Dorsolateral prefrontal cortex (tissue), 120 donors: ENCODE measurements at regions of chr6 and their contacts with region 1.

Region 1: DNA sequence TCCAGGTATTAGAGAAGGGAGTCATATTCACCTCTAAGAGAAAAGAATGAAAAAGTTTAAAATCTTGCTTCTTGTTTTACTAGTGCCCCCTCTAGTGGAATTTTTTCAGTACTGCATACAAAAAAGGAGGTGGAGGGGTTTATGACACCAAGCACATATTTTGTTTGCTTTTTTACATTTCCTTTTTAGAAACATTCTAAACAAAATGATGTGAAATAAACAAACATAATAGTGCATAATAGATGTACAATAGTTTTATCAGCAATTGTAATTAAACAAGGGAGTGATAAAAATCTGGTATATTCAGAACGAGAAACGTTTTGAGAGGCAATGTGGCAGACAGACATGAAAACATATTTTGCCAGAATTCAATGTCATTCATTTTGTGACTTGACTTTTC is 111.0 kb upstream of the TFAP2D start:
- DNase-seq: no peak
- H3K4me3 ChIP-seq: no peak overlapping the region
- H3K27ac ChIP-seq: no peak overlapping the region
- H3K27me3 ChIP-seq: peaks cover 0 to 21% (median 0%) of the 10 kb centered on the region in 45 donors
- CTCF ChIP-seq: peak; percentile 68 to 98 (median 84)

Region 2: GRCh38 chr6:50128420-50129005 is 473.8 kb before region 1 on chr6:
- intact Hi-C with region 1: loop called (anchors 5 to 10 kb)
- DNase-seq: no peak
- H3K4me3 ChIP-seq: no peak overlapping the region
- H3K27ac ChIP-seq: no peak overlapping the region
- H3K27me3 ChIP-seq: peaks cover 0 to 32% (median 4%) of the 10 kb centered on the region in 45 donors
- CTCF ChIP-seq: peak in 55 of 56 donors; percentile 26 to 86 (median 65)

Region 3: DNA sequence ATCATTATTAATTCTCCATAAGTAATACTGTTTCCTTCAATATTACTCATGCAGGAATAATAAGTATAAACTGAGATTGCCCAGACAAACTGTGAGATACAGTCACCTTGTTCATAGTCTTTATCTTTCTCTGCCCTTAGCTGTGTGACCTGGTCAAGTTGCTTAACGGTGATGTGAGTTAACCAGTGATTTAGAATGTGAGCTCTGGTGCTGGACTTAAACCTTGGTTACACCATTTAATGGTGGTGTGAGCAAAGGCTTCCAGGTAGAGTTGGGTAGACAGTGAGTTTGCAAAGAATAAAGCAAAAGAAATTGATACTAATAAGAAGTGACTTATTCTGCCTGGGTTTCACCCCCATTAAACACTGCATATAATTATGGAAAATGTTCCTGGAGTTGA is 466.3 kb before region 1 on chr6:
- intact Hi-C with region 1: loop called (anchors 5 to 10 kb)
- DNase-seq: no peak
- H3K4me3 ChIP-seq: no peak overlapping the region
- H3K27ac ChIP-seq: no peak overlapping the region
- H3K27me3 ChIP-seq: peaks cover 0 to 11% (median 0%) of the 10 kb centered on the region in 45 donors
- CTCF ChIP-seq: no peak

Region 4: DNA sequence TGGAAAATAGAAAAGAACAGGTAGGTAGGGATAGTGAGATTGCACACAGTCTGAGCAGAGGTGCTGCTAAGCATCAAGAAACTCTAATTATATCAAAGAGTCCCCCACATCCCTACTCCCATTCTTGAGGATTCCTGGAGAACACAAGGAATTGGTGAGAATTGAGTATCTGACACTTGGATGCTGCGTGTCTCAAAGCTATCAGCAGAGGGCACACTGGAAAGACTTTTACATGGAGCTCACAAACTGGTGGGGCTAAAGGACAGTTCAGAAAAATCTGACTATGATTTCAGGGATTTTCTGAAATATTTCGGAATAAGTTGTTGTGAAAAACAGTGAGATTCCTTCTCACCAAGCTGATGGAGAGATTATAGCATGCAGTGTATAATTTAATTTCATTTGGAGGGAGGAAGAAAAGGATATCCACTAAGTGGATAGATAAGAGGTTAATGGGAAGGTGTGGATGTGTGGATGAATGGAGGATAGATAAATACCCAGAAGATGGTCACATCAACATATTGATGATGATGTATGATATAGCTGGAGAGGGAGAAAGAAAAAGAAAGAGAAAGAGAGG is 337.2 kb before region 1 on chr6:
- intact Hi-C with region 1: loop called in 1 of 2 experiments (anchors 10 kb)
- DNase-seq: peak in 1 of 10 donors; percentile 17
- H3K4me3 ChIP-seq: no peak overlapping the region
- H3K27ac ChIP-seq: no peak overlapping the region
- H3K27me3 ChIP-seq: peaks cover 0 to 11% (median 0%) of the 10 kb centered on the region in 45 donors
- CTCF ChIP-seq: peak in 43 of 56 donors; percentile 7 to 54 (median 36)